Caki2 (cell line): ENCODE measurements at regions of chr19 and their contacts with region 1.

Region 1: DNA sequence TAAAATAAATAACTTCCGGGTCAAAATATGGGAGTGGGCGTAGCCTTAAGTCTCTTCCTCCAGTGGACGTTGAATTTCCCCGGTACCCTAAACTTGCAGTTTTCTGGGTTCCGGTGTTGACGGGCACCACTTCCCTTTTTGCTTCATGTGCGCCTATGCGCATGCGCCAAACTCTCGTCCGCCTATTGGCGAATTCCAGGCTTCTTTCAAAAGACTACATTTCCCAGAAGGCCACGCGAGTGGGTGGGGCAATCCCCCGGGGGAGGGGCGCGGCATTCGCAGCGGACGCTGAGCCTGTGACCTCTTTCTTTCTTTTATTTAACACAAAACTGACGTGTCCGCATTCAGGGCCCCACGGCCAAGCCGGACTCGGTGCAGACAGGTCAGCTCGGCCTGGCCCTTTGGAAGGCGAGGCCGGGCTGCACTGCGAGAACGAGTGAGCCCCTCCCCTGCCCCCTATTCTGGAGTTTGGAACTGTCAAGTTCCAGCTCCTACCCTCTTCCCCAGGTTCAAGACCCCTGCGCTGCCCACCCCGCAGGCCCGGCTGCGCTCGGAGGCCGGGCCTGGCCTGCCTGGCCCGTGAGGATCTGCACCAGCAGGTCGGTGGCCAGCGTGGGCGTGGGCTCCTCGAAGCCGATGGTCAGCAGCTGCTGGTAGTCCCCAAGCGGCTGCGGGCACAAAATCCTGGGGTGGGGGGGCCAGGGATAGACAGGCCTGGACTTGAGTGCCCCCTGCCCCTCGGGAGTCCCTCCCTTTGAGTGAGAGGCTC is 4.1 kb downstream of the C19orf67 start:
- DNase-seq: peak; percentile 98

Region 2: DNA sequence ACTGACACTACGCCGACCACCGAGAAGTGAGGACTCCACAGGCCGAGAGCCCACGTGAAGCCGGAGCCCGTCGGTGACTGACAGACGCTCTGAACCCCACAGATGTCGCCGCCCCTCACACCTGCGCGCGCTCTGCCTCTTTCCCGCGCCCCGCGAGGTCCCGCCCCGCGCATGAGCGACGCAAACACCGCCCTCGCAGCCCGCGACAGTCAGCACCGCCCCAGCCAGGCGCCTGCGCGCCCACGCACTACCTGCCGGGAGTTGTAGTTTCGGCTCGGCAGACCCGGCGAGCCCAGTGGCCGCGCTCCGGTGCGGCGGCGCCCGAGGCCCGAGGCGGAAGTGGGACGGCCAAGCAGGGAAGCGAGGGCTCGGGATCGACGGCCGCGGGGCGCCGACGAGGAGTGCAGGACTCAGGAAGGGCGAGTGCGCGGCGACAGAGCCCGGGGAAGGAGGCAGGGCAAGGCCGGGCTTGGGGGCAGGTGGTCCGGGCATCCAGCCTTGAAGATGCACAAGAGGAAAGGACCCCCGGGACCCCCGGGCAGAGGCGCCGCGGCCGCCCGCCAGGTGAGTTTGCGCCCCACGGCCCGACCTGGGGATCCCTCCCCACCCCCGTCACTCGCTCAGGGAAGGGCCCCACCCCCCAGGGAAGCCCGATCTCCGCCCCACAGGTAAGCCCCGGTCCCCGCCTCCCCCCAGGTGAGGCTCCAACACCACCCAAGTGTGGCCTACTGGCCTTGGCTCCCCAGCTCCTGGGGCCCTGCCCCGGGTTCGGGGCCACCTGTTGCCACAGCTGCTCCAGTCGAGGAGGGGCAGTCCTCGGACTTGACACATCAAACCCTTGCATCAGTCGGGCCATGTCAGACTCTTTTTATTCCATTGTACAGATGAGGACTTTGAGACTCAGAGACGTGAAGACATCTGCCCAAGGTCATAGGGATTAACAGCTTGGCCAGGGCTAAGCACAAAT is 175.3 kb before region 1 on chr19 and contains the starts of genes BRME1 and CC2D1A:
- in situ Hi-C with region 1: loop called (anchors 25 kb)
- DNase-seq: peak; percentile 84
- total RNA-seq, gene BRME1: 5.5 and 12.7 TPM in 2 replicates
- total RNA-seq, gene CC2D1A: 24.1 and 28.2 TPM in 2 replicates

Region 3: GRCh38 chr19:14183741-14184350 is 102.3 kb after region 1 on chr19:
- in situ Hi-C with region 1: no loop called
- DNase-seq: no peak